Activated CD4-positive, alpha-beta T cell treated with anti-CD3 and anti-CD28 coated beads, Interleukin-2, amount 10 ng/mL, durations not matched to agents 24 days and 14 days (primary cell): ENCODE measurements at regions of chr13 and their contacts with region 1.

Region 1: GRCh38 chr13:50365408-50366391 is 350.5 kb downstream of the KCNRG start:
- DNase-seq: peak; percentile 86
- H3K4me3 Mint-ChIP-seq: peak overlapping the region; percentile 68
- H3K27ac Mint-ChIP-seq: peak overlapping the region; percentile 84
- H3K4me1 Mint-ChIP-seq: peaks cover 43% of the 10 kb centered on the region
- H3K27me3 Mint-ChIP-seq: peaks cover 39% of the 10 kb centered on the region

Region 2: GRCh38 chr13:50081679-50082425 is 283.8 kb before region 1 on chr13:
- intact Hi-C with region 1: loop called (anchors 2 kb)
- DNase-seq: peak; percentile 99
- H3K4me3 Mint-ChIP-seq: peak overlapping the region; percentile 100
- H3K27ac Mint-ChIP-seq: peak overlapping the region; percentile 100
- H3K4me1 Mint-ChIP-seq: peaks cover 45% of the 10 kb centered on the region
- H3K27me3 Mint-ChIP-seq: peaks cover 5% of the 10 kb centered on the region

Region 3: DNA sequence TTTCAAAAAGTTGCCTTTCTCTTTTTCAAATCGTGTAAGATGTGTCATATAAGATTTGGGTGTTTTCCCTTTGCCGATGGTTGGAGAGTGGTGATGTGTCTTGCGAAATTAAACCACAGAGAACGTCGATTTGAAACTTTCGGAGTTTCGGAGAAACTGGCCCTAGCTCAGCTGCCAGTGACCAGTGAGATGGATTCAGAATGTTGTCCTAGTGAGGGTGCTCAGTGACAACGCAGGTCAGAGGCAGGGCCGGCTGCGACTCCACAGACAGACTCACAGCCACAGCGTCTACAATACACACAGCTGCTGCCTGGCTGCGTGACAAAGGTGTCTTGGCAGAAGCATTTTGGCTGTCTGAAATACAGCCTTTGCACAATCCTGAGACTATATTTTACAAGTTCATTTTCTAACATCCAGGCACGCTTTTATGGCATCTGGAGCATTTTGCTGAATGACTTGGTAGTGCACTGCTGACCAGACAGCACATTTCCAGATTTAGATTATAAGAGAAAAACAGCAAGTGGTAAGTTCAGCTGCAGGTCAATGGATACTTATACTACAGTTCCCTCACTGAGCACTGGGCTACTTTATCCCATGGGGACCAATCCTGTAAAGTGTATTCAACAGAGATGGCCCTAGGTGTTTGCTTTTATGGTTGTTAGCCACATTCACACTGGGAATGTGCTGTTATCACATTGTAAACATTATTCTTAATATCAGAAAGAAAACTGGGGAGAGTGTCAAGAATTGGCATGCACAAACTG is 142.9 kb before region 1 on chr13:
- intact Hi-C with region 1: loop called (anchors 1 kb)
- DNase-seq: peak; percentile 56
- H3K4me3 Mint-ChIP-seq: no peak overlapping the region
- H3K27ac Mint-ChIP-seq: no peak overlapping the region
- H3K4me1 Mint-ChIP-seq: peaks cover 37% of the 10 kb centered on the region
- H3K27me3 Mint-ChIP-seq: peaks cover 40% of the 10 kb centered on the region

Region 4: GRCh38 chr13:50255639-50256038 is 110.1 kb before region 1 on chr13:
- intact Hi-C with region 1: loop called (anchors 1 kb)
- DNase-seq: no peak
- H3K4me3 Mint-ChIP-seq: no peak overlapping the region
- H3K27ac Mint-ChIP-seq: no peak overlapping the region
- H3K4me1 Mint-ChIP-seq: peaks cover 27% of the 10 kb centered on the region
- H3K27me3 Mint-ChIP-seq: peaks cover 54% of the 10 kb centered on the region

Region 5: GRCh38 chr13:50594276-50595051 is 228.8 kb after region 1 on chr13:
- intact Hi-C with region 1: loop called (anchors 2 kb)
- DNase-seq: peak; percentile 71
- H3K4me3 Mint-ChIP-seq: peak overlapping the region; percentile 62
- H3K27ac Mint-ChIP-seq: peak overlapping the region; percentile 82
- H3K4me1 Mint-ChIP-seq: peaks cover 34% of the 10 kb centered on the region
- H3K27me3 Mint-ChIP-seq: peaks cover 3% of the 10 kb centered on the region